ENCODE measurements at regions of chr2 and their contacts with region 1.

Region 1: GRCh38 chr2:188369365-188369764 is 77.7 kb downstream of the GULP1 start:
- DNase-seq: no peak
- H3K4me3 ChIP-seq: no peak overlapping the region
- H3K27ac ChIP-seq: no peak overlapping the region
- H3K4me1 ChIP-seq: peaks cover 0 to 17% (median 3%) of the 10 kb centered on the region in 4 experiments; a peak in 5 of 7 replicates
- H3K27me3 ChIP-seq: no peaks in the 10 kb centered on the region
- CTCF ChIP-seq: peak; percentile 36 to 71 (median 63)
- EP300 ChIP-seq: no peak
- POLR2A ChIP-seq: no peak
- RAD21 ChIP-seq: peak; percentile 58 to 69

Region 2: DNA sequence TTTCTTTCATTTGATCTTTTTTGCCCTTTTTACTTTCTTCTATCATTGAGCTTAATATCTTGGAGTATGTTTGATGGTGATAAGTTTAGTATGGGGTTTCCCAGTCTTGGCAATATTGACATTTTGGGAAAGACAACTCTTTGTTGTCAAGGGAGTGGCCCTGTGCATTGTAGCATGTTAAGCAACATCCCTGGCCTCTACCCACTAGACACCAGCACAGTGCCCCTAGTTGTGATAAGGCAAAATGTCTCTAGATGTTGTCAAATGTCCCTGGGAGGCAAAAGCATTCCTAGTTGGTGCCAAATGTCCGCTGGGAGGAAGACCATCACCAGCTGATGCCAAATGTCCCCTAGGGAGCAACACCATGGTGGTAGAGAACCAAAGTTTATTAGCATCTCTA is 49.5 kb before region 1 on chr2:
- CTCF ChIA-PET with region 1: interaction called, 12 read pairs
- POLR2A ChIA-PET with region 1: no interaction called
- DNase-seq: no peak
- H3K4me3 ChIP-seq: no peak overlapping the region
- H3K27ac ChIP-seq: no peak overlapping the region
- H3K4me1 ChIP-seq: peaks cover 0 to 11% (median 8%) of the 10 kb centered on the region in 4 experiments; a peak in 5 of 7 replicates
- H3K27me3 ChIP-seq: no peaks in the 10 kb centered on the region
- CTCF ChIP-seq: peak in 2 of 3 experiments; percentile 5 to 60; a peak in 2 of 4 replicates
- EP300 ChIP-seq: no peak
- POLR2A ChIP-seq: no peak
- RAD21 ChIP-seq: peak; percentile 18 to 45; a peak in 2 of 4 replicates

Region 3: GRCh38 chr2:188353282-188353681 is 16.1 kb before region 1 on chr2:
- CTCF ChIA-PET with region 1: interaction called, 11 read pairs
- POLR2A ChIA-PET with region 1: no interaction called
- DNase-seq: no peak
- H3K4me3 ChIP-seq: no peak overlapping the region
- H3K27ac ChIP-seq: no peak overlapping the region
- H3K4me1 ChIP-seq: peaks cover 0 to 5% (median 3%) of the 10 kb centered on the region in 4 experiments; a peak in 2 of 7 replicates
- H3K27me3 ChIP-seq: no peaks in the 10 kb centered on the region
- CTCF ChIP-seq: no peak
- EP300 ChIP-seq: no peak
- POLR2A ChIP-seq: no peak
- RAD21 ChIP-seq: no peak

Region 4: DNA sequence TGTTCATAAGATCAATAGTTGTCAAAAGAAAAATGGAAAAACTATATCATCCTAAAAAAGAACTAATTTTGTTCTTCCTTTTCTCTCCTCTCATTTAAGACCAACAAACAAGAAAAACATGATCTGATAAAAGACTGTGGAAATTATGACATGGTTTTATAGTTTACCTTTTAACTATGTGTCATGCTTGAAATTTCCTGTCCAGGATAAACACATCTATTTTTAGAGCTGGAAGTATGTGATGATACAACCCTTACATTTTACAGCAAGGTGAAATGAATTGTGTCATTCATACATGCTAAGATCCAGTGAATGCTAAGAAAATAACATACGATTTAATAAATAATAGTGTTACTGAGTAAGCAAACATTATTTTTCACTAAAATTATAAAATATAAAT is 12.2 kb after region 1 on chr2:
- CTCF ChIA-PET with region 1: interaction called, 16 read pairs
- POLR2A ChIA-PET with region 1: no interaction called
- DNase-seq: no peak
- H3K4me3 ChIP-seq: no peak overlapping the region
- H3K27ac ChIP-seq: no peak overlapping the region
- H3K4me1 ChIP-seq: peaks cover 0 to 3% (median 1%) of the 10 kb centered on the region in 4 experiments; a peak in 2 of 7 replicates
- H3K27me3 ChIP-seq: no peaks in the 10 kb centered on the region
- CTCF ChIP-seq: no peak
- EP300 ChIP-seq: no peak
- POLR2A ChIP-seq: no peak
- RAD21 ChIP-seq: no peak

Region 5: DNA sequence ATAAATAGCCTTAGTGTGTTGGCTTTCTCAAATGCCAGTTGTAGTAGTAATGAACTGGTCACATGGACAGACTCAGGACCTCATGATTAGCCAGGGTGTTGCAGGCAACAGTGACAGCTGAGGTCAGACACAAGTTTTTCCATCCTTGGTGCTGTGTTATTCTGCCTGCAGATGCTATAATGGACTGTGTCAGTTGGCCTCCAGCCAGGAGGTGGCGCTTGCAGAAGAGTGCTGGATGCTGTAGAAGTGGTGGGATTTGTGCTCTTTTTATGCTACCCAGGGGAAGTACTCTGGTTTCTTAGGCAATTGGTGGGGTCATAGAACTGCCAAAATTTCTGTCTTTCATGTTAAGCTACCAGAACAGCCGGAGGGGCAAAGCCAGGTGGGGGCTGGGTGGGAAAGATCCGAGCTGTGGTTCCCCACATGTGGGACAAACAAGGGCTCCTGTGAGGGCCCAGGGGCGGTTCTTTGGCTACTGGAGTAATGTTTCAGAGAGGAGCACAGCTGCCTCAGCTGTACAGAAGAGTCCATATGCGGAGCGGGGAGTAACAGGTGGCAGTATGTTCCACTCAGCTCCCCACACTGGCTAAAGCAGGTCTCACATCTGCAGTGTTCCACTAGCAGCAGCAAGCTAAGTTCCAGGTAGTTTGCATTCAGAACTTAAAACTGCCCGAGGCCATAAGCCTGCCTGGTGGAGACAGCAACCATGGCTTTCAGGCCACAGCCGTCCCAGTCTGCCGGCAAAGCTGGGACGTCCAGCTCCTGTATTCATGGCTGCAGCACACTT is 26.7 kb after region 1 on chr2:
- CTCF ChIA-PET with region 1: interaction called, 13 read pairs
- POLR2A ChIA-PET with region 1: no interaction called
- DNase-seq: no peak
- H3K4me3 ChIP-seq: no peak overlapping the region
- H3K27ac ChIP-seq: no peak overlapping the region
- H3K4me1 ChIP-seq: peaks cover 0 to 8% (median under 1%) of the 10 kb centered on the region in 4 experiments; a peak in 3 of 7 replicates
- H3K27me3 ChIP-seq: no peaks in the 10 kb centered on the region
- CTCF ChIP-seq: peak; percentile 41 to 72 (median 67)
- EP300 ChIP-seq: no peak
- POLR2A ChIP-seq: no peak
- RAD21 ChIP-seq: peak; percentile 27 to 54; a peak in 3 of 4 replicates